ENCODE measurements at regions of chr21 and their contacts with region 1.

Region 1: GRCh38 chr21:29298348-29299045 is at the start of gene BACH1:
- DNase-seq: peak; percentile 86
- ATAC-seq: peak; percentile 51
- H3K4me3 Mint-ChIP-seq: peak within 1 kb of the TSS; percentile 97
- H3K27ac Mint-ChIP-seq: peak within 1 kb of the TSS; percentile 99
- H3K4me1 Mint-ChIP-seq: peaks cover 74% of the 10 kb centered on the region
- H3K27me3 Mint-ChIP-seq: no peaks in the 10 kb centered on the region
- CTCF ChIP-seq: no peak
- total RNA-seq, gene BACH1: 141 and 152 TPM in 2 replicates

Region 2: GRCh38 chr21:28884976-28885852 is 413.3 kb before region 1 on chr21:
- CTCF ChIA-PET with region 1: no interaction called
- POLR2A ChIA-PET with region 1: no interaction called
- intact Hi-C with region 1: loop called (anchors 1 kb)
- DNase-seq: peak; percentile 88
- ATAC-seq: peak; percentile 95
- H3K4me3 Mint-ChIP-seq: peak overlapping the region; percentile 88
- H3K27ac Mint-ChIP-seq: peak overlapping the region; percentile 93
- H3K4me1 Mint-ChIP-seq: peaks cover 20% of the 10 kb centered on the region
- H3K27me3 Mint-ChIP-seq: peaks cover 7% of the 10 kb centered on the region
- CTCF ChIP-seq: no peak

Region 3: GRCh38 chr21:29073222-29074006 is 225.1 kb before region 1 on chr21 and contains the start of gene CCT8:
- CTCF ChIA-PET with region 1: no interaction called
- POLR2A ChIA-PET with region 1: interaction called, 91 read pairs
- intact Hi-C with region 1: loop called (anchors 1 kb)
- DNase-seq: peak; percentile 93
- ATAC-seq: peak; percentile 90
- H3K4me3 Mint-ChIP-seq: peak within 1 kb of the TSS; percentile 98
- H3K27ac Mint-ChIP-seq: peak within 1 kb of the TSS; percentile 98
- H3K4me1 Mint-ChIP-seq: peaks cover 55% of the 10 kb centered on the region
- H3K27me3 Mint-ChIP-seq: no peaks in the 10 kb centered on the region
- CTCF ChIP-seq: no peak
- total RNA-seq, gene CCT8: 170 and 179 TPM in 2 replicates

Region 4: GRCh38 chr21:29104239-29104708 is 194.2 kb before region 1 on chr21:
- CTCF ChIA-PET with region 1: interaction called, 4 read pairs
- POLR2A ChIA-PET with region 1: interaction called, 18 read pairs
- intact Hi-C with region 1: loop called (anchors 1 kb)
- DNase-seq: no peak
- ATAC-seq: no peak
- H3K4me3 Mint-ChIP-seq: no peak overlapping the region
- H3K27ac Mint-ChIP-seq: no peak overlapping the region
- H3K4me1 Mint-ChIP-seq: peaks cover 11% of the 10 kb centered on the region
- H3K27me3 Mint-ChIP-seq: no peaks in the 10 kb centered on the region
- CTCF ChIP-seq: no peak

Region 5: DNA sequence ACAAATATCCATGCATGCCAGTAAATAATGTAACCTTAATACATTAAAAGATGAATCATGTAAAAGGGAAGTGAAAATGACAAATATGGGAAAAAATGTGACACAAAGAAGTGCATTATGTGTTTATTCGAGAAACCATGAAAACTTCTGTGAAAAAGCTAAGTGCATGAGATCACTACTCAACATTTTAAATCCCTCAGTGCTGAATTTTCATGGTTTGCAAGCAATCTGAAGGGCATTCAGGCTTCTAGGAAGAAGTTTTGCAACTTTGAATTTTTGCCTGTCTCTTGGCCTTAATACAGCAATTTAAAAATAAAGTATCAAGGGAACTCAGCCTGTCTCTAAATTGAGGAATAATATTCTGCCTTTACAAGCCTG is 89.8 kb before region 1 on chr21:
- CTCF ChIA-PET with region 1: interaction called, 4 read pairs
- POLR2A ChIA-PET with region 1: interaction called, 24 read pairs
- intact Hi-C with region 1: loop called (anchors 1 kb)
- DNase-seq: no peak
- ATAC-seq: peak; percentile 67
- H3K4me3 Mint-ChIP-seq: peak overlapping the region; percentile 62
- H3K27ac Mint-ChIP-seq: peak overlapping the region; percentile 84
- H3K4me1 Mint-ChIP-seq: peaks cover 23% of the 10 kb centered on the region
- H3K27me3 Mint-ChIP-seq: no peaks in the 10 kb centered on the region
- CTCF ChIP-seq: no peak

Region 6: DNA sequence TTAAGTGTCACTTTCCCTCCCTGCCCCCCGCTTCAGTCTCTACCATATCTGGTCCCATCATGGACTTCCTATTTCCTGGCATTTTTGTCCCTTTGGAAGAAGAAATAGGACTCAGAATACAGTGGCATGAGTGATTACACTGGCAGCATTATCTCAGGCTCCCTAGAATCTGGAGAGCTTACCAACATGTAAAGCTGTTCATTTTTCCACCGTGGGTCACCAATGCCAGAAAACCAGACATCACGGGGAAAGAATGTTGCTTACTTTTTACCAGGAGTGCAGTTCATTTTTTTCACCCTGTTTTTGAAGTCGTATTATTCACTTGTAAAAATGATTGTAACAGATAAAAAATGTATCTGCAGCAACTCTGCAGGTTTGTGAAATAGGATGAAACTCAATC is 45.0 kb after region 1 on chr21:
- CTCF ChIA-PET with region 1: interaction called, 4 read pairs
- POLR2A ChIA-PET with region 1: interaction called, 27 read pairs
- intact Hi-C with region 1: loop called (anchors 1 kb)
- DNase-seq: no peak
- ATAC-seq: no peak
- H3K4me3 Mint-ChIP-seq: no peak overlapping the region
- H3K27ac Mint-ChIP-seq: no peak overlapping the region
- H3K4me1 Mint-ChIP-seq: peaks cover 36% of the 10 kb centered on the region
- H3K27me3 Mint-ChIP-seq: no peaks in the 10 kb centered on the region
- CTCF ChIP-seq: no peak

Measured in activated B cell treated with CpG ODN at 0.5 μM for 24 hours (primary cell).